GM12878 (cell line): ENCODE measurements at regions of chr4 and their contacts with region 1.

Region 1: GRCh38 chr4:99808260-99808857 is 8.3 kb upstream of the DAPP1 start:
- DNase-seq: no peak
- ATAC-seq: peak; percentile 94
- H3K4me3 ChIP-seq: no peak overlapping the region
- H3K27ac ChIP-seq: no peak overlapping the region
- H3K4me1 ChIP-seq: peaks cover 5% of the 10 kb centered on the region; the same call in 1 of the 2 replicates
- H3K27me3 ChIP-seq: no peaks in the 10 kb centered on the region; a peak in 1 of 4 replicates
- CTCF ChIP-seq: peak; percentile 75 to 85 (median 79)
- EP300 ChIP-seq: no peak
- POLR2A ChIP-seq: no peak
- RAD21 ChIP-seq: peak; percentile 93

Region 2: GRCh38 chr4:98838977-98839618 is 969.3 kb before region 1 on chr4:
- CTCF ChIA-PET with region 1: no interaction called
- POLR2A ChIA-PET with region 1: no interaction called
- RAD21 ChIA-PET with region 1: no interaction called
- SMC1A ChIA-PET with region 1: no interaction called
- in situ Hi-C with region 1: no loop called
- intact Hi-C with region 1: no loop called
- DNase-seq: no peak
- ATAC-seq: no peak
- H3K4me3 ChIP-seq: no peak overlapping the region
- H3K27ac ChIP-seq: no peak overlapping the region
- H3K4me1 ChIP-seq: no peaks in the 10 kb centered on the region
- H3K27me3 ChIP-seq: no peaks in the 10 kb centered on the region
- CTCF ChIP-seq: no peak
- EP300 ChIP-seq: no peak
- POLR2A ChIP-seq: no peak
- RAD21 ChIP-seq: no peak

Region 3: GRCh38 chr4:99552872-99553271 is 255.5 kb before region 1 on chr4:
- CTCF ChIA-PET with region 1: interaction called, 17 read pairs
- POLR2A ChIA-PET with region 1: no interaction called
- RAD21 ChIA-PET with region 1: interaction called, 7 read pairs
- SMC1A ChIA-PET with region 1: interaction called, 8 read pairs
- in situ Hi-C with region 1: no loop called
- intact Hi-C with region 1: no loop called
- DNase-seq: no peak
- ATAC-seq: no peak
- H3K4me3 ChIP-seq: no peak overlapping the region
- H3K27ac ChIP-seq: no peak overlapping the region
- H3K4me1 ChIP-seq: no peaks in the 10 kb centered on the region
- H3K27me3 ChIP-seq: no peaks in the 10 kb centered on the region
- CTCF ChIP-seq: no peak
- EP300 ChIP-seq: no peak
- POLR2A ChIP-seq: no peak
- RAD21 ChIP-seq: no peak

Region 4: DNA sequence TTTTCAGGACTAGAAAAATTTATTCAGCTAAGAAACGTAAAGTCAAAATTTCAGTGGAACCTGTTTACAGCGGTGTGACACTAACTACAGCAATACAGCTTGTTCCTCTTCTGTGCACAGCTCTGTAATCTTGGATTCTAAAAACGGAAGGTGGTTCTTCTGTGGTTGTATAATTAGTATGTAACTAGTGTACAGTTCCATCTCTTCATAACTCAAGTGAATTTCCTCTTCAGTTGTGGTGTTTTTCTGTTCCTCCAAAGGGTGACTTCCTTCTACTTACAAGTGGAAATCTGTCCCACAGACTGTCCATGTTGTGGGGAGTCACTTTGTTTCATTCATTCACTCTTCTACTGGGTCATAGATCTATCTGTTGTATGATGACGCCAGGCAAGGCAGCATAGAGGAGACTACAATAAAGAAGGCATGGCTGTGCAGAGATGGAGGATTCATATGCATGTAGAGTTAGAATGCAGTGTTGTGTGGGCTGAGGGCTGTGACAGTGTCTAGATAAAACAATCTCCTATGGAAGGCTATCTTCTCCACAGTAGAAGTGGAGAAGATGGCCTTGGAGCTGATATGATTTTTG is 13.7 kb after region 1 on chr4:
- CTCF ChIA-PET with region 1: interaction called, 62 read pairs
- POLR2A ChIA-PET with region 1: interaction called, 4 read pairs
- RAD21 ChIA-PET with region 1: interaction called, 14 read pairs
- SMC1A ChIA-PET with region 1: interaction called, 16 read pairs
- in situ Hi-C with region 1: no loop called
- intact Hi-C with region 1: no loop called
- DNase-seq: peak; percentile 59
- ATAC-seq: peak; percentile 73
- H3K4me3 ChIP-seq: peak overlapping the region; percentile 59; the same call in 1 of the 2 replicates
- H3K27ac ChIP-seq: peak overlapping the region; percentile 70
- H3K4me1 ChIP-seq: peaks cover 17% of the 10 kb centered on the region; the same call in 1 of the 2 replicates
- H3K27me3 ChIP-seq: no peaks in the 10 kb centered on the region
- CTCF ChIP-seq: no peak
- EP300 ChIP-seq: no peak
- POLR2A ChIP-seq: no peak
- RAD21 ChIP-seq: no peak

Region 5: DNA sequence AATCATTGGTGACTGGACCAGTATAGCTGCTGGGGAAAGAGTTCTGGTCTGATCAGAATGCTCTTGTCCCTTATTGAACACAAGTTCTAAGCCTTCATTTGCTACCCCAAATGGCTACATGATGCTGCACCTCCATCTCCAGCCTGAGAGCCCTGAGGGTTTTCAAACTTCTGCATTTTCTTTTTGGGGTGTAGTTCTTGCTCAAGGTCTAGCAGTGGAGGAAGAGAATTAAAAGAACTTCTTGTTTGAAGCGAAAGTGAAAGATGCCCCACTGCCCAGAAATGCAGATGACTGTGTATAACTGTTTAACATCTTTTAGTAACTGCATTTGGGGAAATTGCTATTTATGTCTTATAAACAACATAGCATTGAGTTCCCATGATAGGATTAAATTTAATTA is 47.3 kb after region 1 on chr4:
- CTCF ChIA-PET with region 1: interaction called, 23 read pairs
- POLR2A ChIA-PET with region 1: interaction called, 6 read pairs
- RAD21 ChIA-PET with region 1: interaction called, 9 read pairs
- SMC1A ChIA-PET with region 1: interaction called, 18 read pairs
- in situ Hi-C with region 1: no loop called
- intact Hi-C with region 1: no loop called
- DNase-seq: peak; percentile 53
- ATAC-seq: peak; percentile 28
- H3K4me3 ChIP-seq: no peak overlapping the region
- H3K27ac ChIP-seq: peak overlapping the region; percentile 58; the same call in 1 of the 2 replicates
- H3K4me1 ChIP-seq: peaks cover 43% of the 10 kb centered on the region
- H3K27me3 ChIP-seq: no peaks in the 10 kb centered on the region
- CTCF ChIP-seq: no peak
- EP300 ChIP-seq: 0 out of 4 replicates have a peak, but pooled peaks of 1 of the 2 experiments have one; percentile 9
- POLR2A ChIP-seq: no peak
- RAD21 ChIP-seq: no peak

Region 6: DNA sequence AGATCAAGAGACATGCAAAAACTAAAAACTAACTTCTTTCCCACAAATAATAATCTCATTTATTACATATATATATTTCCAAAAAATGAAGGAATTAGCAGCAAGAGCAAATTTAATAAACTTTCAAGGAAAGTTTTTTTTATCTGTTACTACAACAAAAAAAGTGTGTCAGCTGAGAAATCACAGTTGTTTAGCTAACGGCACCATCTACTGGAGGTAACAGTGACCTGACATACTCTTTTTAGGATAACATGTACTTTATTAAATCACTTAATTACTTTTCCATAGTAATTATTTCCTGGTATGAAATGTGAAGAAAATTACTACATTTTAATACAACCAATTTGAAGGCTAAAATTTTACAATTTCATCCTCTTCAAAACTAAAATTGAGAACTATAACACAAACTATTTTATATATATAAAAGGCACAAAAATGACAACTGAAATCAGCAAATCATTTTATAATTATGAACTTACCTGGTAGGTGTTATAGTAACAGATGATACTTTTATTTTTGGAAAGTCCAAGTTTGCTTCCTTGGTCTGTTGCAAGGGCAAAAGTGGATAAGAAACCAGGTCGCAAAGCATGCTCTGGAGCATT is 76.8 kb after region 1 on chr4:
- CTCF ChIA-PET with region 1: interaction called, 167 read pairs
- POLR2A ChIA-PET with region 1: interaction called, 6 read pairs
- RAD21 ChIA-PET with region 1: interaction called, 98 read pairs
- SMC1A ChIA-PET with region 1: interaction called, 75 read pairs
- in situ Hi-C with region 1: no loop called
- intact Hi-C with region 1: loop called (anchors 1 kb)
- DNase-seq: no peak
- ATAC-seq: peak; percentile 80
- H3K4me3 ChIP-seq: no peak overlapping the region
- H3K27ac ChIP-seq: no peak overlapping the region
- H3K4me1 ChIP-seq: no peaks in the 10 kb centered on the region
- H3K27me3 ChIP-seq: no peaks in the 10 kb centered on the region
- CTCF ChIP-seq: peak; percentile 47 to 75 (median 49); a peak in 4 of 6 replicates
- EP300 ChIP-seq: no peak
- POLR2A ChIP-seq: no peak
- RAD21 ChIP-seq: peak; percentile 85

Region 7: GRCh38 chr4:99949034-99949998 is 141.0 kb after region 1 on chr4:
- CTCF ChIA-PET with region 1: interaction called, 106 read pairs
- POLR2A ChIA-PET with region 1: interaction called, 8 read pairs
- RAD21 ChIA-PET with region 1: interaction called, 95 read pairs
- SMC1A ChIA-PET with region 1: interaction called, 42 read pairs
- in situ Hi-C with region 1: no loop called
- intact Hi-C with region 1: no loop called
- DNase-seq: peak; percentile 77
- ATAC-seq: peak; percentile 39
- H3K4me3 ChIP-seq: peak overlapping the region; percentile 94
- H3K27ac ChIP-seq: peak overlapping the region; percentile 97
- H3K4me1 ChIP-seq: peaks cover 7% of the 10 kb centered on the region; the same call in 1 of the 2 replicates
- H3K27me3 ChIP-seq: no peaks in the 10 kb centered on the region
- CTCF ChIP-seq: peak; percentile 86 to 94 (median 89)
- EP300 ChIP-seq: no peak
- POLR2A ChIP-seq: peak; percentile 78
- RAD21 ChIP-seq: peak; percentile 75

Region 8: GRCh38 chr4:100609810-100610209 is 801.5 kb after region 1 on chr4:
- CTCF ChIA-PET with region 1: no interaction called
- POLR2A ChIA-PET with region 1: no interaction called
- RAD21 ChIA-PET with region 1: no interaction called
- SMC1A ChIA-PET with region 1: no interaction called
- in situ Hi-C with region 1: no loop called
- intact Hi-C with region 1: no loop called
- DNase-seq: no peak
- ATAC-seq: peak; percentile 59
- H3K4me3 ChIP-seq: no peak overlapping the region
- H3K27ac ChIP-seq: no peak overlapping the region
- H3K4me1 ChIP-seq: no peaks in the 10 kb centered on the region
- H3K27me3 ChIP-seq: no peaks in the 10 kb centered on the region
- CTCF ChIP-seq: no peak
- EP300 ChIP-seq: no peak
- POLR2A ChIP-seq: no peak
- RAD21 ChIP-seq: no peak